PC-9 (cell line): ENCODE measurements at regions of chr14 and their contacts with region 1.

Region 1: DNA sequence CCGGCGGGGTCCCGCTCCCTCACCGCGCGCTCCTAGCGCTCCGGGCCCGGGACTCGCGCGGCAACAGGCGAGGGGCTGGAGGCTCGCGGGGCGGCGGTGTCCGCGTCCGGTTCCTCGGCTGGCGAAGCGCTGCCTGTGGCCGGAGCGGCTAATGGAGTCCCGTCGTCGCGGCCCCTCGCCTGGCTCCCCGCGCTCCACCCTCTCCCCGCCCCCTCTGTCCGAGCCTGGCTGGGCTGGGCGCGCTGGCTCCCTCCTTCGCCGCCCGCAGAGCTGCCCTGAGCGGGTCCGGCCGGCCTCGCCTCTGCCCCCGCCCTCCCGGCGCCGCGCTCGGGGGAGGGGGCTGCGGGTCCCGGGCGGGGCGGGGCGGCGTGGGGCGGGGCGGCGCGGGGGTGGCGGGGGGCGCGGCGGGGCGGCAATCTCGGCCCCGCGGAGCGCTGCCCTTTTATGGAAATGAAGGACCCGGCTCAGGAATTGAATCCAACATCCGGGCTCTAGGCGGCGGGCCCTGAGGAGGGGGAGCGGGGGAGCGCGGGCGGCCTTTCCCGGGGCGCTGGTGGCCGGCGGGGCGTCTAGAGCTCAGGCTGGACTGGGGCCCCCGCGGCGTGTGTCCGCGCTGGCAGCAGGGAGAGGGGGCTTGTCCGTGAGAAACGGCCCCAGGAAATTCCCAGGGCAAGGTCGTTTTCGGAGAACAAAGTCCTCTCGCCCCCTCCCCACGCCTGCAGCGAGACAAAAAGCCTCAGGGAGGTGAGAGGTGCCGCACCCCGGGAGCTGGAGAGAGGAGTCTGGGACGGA is at the start of gene FERMT2:
- DNase-seq: peak; percentile 42 to 86
- H3K4me3 ChIP-seq: peak within 1 kb of the TSS; percentile 93
- H3K27ac ChIP-seq: peak within 1 kb of the TSS; percentile 59
- H3K4me1 ChIP-seq: peaks cover 23% of the 10 kb centered on the region
- H3K27me3 ChIP-seq: no peaks in the 10 kb centered on the region
- CTCF ChIP-seq: no peak
- total RNA-seq, gene FERMT2: 9.0 and 9.7 TPM in 2 replicates

Region 2: GRCh38 chr14:52552063-52552988 is 398.8 kb before region 1 on chr14 and contains the starts of genes GPR137C and TXNDC16:
- CTCF ChIA-PET with region 1: no interaction called
- POLR2A ChIA-PET with region 1: interaction called, 4 read pairs
- intact Hi-C with region 1: loop called (anchors 5 kb)
- DNase-seq: peak; percentile 96 to 99
- H3K4me3 ChIP-seq: peak within 1 kb of the TSS; percentile 65
- H3K27ac ChIP-seq: peak within 1 kb of the TSS; percentile 33; the same call in 1 of the 2 replicates
- H3K4me1 ChIP-seq: peaks cover 21% of the 10 kb centered on the region
- H3K27me3 ChIP-seq: no peaks in the 10 kb centered on the region
- CTCF ChIP-seq: no peak
- total RNA-seq, gene GPR137C: 1.1 and 1.2 TPM in 2 replicates
- total RNA-seq, gene TXNDC16: 5.7 and 7.9 TPM in 2 replicates

Region 3: GRCh38 chr14:52835122-52835903 is 115.8 kb before region 1 on chr14:
- CTCF ChIA-PET with region 1: no interaction called
- POLR2A ChIA-PET with region 1: interaction called, 20 read pairs
- intact Hi-C with region 1: no loop called
- DNase-seq: peak in 1 of 2 experiments; percentile 60
- H3K4me3 ChIP-seq: no peak overlapping the region
- H3K27ac ChIP-seq: no peak overlapping the region
- H3K4me1 ChIP-seq: 0 out of 2 replicates have a peak, but pooled peaks cover 7% of the 10 kb centered on the region
- H3K27me3 ChIP-seq: no peaks in the 10 kb centered on the region
- CTCF ChIP-seq: no peak

Region 4: GRCh38 chr14:52906071-52906601 is 45.0 kb before region 1 on chr14:
- CTCF ChIA-PET with region 1: no interaction called
- POLR2A ChIA-PET with region 1: interaction called, 32 read pairs
- intact Hi-C with region 1: no loop called
- DNase-seq: peak in 1 of 2 experiments; percentile 74
- H3K4me3 ChIP-seq: no peak overlapping the region; the same call in 1 of the 2 replicates
- H3K27ac ChIP-seq: peak overlapping the region; percentile 47
- H3K4me1 ChIP-seq: peaks cover 25% of the 10 kb centered on the region
- H3K27me3 ChIP-seq: no peaks in the 10 kb centered on the region
- CTCF ChIP-seq: no peak

Region 5: DNA sequence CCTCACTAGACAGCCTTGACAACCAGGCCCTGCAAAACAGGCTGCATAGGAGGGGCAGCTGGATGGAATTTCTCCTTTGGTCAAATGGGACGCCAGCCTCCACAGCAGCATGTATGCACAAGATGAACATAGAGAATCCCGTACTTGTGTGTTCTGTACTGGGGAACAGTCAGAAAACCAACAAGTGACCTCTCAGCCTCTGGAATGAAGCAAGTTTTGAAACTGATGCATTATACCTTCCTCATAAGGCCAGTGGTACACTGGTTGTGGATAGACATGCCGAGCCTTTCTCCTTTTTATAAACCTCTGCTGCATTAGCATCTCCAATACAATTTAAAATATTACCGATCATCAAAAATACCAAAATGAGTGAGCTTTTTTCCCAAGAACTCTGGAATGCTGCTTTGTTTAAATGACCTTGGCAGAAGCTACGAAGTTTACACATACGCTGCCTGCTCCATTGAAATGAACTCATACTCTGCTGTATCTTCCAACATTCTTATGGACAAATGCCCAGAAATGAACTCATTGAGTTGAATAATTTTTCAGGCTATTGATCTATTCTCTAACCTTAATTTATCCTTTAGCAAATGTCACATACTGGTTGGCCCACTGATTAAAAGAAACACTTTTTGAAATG is 47.4 kb after region 1 on chr14:
- CTCF ChIA-PET with region 1: no interaction called
- POLR2A ChIA-PET with region 1: no interaction called
- intact Hi-C with region 1: no loop called
- DNase-seq: no peak
- H3K4me3 ChIP-seq: no peak overlapping the region
- H3K27ac ChIP-seq: no peak overlapping the region
- H3K4me1 ChIP-seq: no peaks in the 10 kb centered on the region
- H3K27me3 ChIP-seq: no peaks in the 10 kb centered on the region
- CTCF ChIP-seq: no peak